B cell (primary cell): ENCODE measurements at regions of chr6 and their contacts with region 1.

Region 1: DNA sequence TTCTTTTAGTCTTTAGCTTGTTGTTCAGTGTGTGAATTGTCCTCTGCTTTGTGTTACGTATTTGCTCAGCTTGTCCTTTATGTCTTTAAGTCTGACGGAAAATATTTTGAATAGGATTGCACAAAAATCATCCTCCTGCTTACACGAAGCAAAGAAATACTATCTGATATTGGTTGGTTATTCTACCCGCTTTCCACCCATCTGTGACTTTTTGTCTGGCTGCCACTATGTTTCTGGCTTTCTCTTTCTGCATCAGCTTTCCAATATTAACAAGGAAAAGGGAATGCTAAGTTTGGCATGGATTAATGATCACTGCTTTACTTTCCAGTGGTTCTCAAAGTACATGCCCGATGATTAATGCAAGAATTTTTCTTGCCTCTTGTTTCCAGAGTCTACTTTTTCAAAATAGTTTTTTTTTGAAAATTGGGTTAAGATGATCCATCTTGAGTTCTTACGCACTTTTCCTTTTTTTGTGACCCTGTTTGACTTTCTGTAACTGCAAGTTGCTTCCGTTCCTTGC is 57.0 kb downstream of the RNF144B start:
- DNase-seq: no peak
- ATAC-seq: no peak
- H3K4me3 ChIP-seq: no peak overlapping the region
- H3K4me3 Mint-ChIP-seq: no peak overlapping the region
- H3K27ac ChIP-seq: no peak overlapping the region
- H3K27ac Mint-ChIP-seq: no peak overlapping the region
- H3K4me1 ChIP-seq: peaks cover 0 to 7% of the 10 kb centered on the region in 2 donors
- H3K4me1 Mint-ChIP-seq: peaks cover 20% of the 10 kb centered on the region
- H3K27me3 ChIP-seq: no peaks in the 10 kb centered on the region
- H3K27me3 Mint-ChIP-seq: no peaks in the 10 kb centered on the region
- CTCF ChIP-seq: no peak

Region 2: GRCh38 chr6:18400831-18401446 is 43.2 kb before region 1 on chr6:
- CTCF ChIA-PET with region 1: no interaction called
- POLR2A ChIA-PET with region 1: no interaction called
- intact Hi-C with region 1: loop called (anchors 5 kb)
- DNase-seq: peak; percentile 73
- ATAC-seq: peak; percentile 90
- H3K4me3 ChIP-seq: peak overlapping the region in 2 of 5 experiments; percentile 7 to 11
- H3K4me3 Mint-ChIP-seq: peak overlapping the region; percentile 70
- H3K27ac ChIP-seq: peak overlapping the region; percentile 54 to 84
- H3K27ac Mint-ChIP-seq: peak overlapping the region; percentile 90
- H3K4me1 ChIP-seq: peaks cover 23 to 39% of the 10 kb centered on the region in 2 donors
- H3K4me1 Mint-ChIP-seq: peaks cover 40% of the 10 kb centered on the region
- H3K27me3 ChIP-seq: no peaks in the 10 kb centered on the region
- H3K27me3 Mint-ChIP-seq: no peaks in the 10 kb centered on the region
- CTCF ChIP-seq: no peak